ENCODE measurements at regions of chr6 and their contacts with region 1.

Region 1: DNA sequence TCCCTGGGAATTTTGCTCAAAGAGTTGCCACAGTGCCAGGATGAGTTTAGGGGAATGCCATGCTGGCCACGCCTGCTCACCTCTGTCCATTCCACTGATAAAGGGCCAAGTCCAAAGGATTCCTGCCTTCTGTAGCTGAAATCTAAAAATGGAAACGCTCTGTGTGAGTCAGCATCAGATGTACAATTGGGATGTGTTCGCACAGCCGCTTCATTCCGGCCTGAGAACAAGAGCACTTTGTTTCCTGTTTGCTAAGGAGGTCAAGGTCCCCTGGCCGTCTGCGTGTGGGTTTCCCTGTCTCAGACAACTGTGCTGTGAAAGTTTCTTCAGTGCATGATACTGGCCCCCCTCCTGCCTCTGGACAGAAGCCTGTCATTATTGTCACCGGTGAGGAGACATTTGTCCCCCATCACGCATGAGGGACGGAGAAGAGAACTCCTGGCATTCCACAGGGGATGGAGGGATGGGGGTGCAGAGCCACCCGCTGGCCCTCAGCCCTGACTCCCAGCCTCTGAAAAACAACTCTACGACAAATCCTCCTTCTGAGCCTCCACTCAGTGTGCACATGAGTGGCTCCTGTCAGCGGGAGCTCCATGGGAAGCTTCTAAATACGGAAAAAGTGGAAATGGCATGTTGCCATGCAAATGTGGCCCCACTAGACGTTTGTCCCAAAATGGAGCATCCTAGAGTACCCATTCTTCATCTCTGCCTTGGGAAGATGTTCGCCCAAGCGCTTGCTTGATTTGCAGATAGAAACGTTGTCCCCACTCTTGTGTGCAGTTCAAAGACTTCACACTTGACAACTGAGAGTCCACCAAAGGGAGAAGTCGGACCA is 143.5 kb upstream of the AFDN start:
- DNase-seq: peak; percentile 42 to 81
- ATAC-seq: peak; percentile 79 to 92 (median 90)
- H3K4me3 ChIP-seq: no peak overlapping the region
- H3K27ac ChIP-seq: peak overlapping the region; percentile 63 to 88 (median 77)
- H3K4me1 ChIP-seq: peaks cover 16 to 63% (median 44%) of the 10 kb centered on the region in 9 donors
- H3K27me3 ChIP-seq: peaks cover 0 to 18% (median 0%) of the 10 kb centered on the region in 7 donors
- CTCF ChIP-seq: no peak

Region 2: GRCh38 chr6:167826230-167826895 is 143.1 kb after region 1 on chr6:
- intact Hi-C with region 1: loop called in 2 of 10 experiments (anchors 5 kb)
- DNase-seq: peak; percentile 75 to 77
- ATAC-seq: peak; percentile 91 to 95 (median 93)
- H3K4me3 ChIP-seq: peak overlapping the region; percentile 68 to 93 (median 76)
- H3K27ac ChIP-seq: peak overlapping the region in 7 of 10 donors; percentile 14 to 67 (median 54)
- H3K4me1 ChIP-seq: peaks cover 4 to 47% (median 42%) of the 10 kb centered on the region in 9 donors
- H3K27me3 ChIP-seq: peaks cover 0 to 43% (median 0%) of the 10 kb centered on the region in 7 donors
- CTCF ChIP-seq: peak; percentile 23 to 60 (median 41)